SK-N-SH (cell line): ENCODE measurements at regions of chr3 and their contacts with region 1.

Region 1: DNA sequence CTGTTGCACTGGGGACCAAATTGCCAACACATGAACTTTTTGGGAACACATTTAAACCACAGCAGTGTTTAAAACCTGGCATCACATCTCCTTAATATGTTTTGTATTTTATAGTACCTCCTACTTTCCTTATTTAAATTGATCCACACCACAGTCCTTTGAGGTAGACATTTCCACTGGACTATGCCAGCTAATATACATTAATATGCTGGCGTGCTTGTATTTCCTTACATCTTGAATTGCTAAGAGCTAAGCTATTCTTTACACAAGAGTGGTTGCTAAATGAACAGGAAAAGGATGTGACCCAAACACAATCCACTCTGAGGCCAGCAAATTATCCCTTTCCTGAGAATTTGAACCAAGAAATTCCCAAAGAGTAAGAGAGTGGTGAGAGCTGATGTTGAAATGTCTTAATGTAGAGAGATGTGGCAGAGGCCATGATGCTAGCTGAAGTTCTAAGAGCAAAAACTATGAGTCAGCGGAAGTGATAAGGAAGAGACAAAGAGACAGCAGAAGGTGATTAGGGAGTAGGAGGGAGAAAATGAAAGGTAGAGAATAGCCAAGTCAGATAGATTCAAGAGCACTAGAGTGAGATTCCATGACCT is 131.2 kb downstream of the CD47 start:
- DNase-seq: no peak
- H3K4me3 ChIP-seq: no peak overlapping the region
- H3K27ac ChIP-seq: no peak overlapping the region
- H3K4me1 ChIP-seq: peaks cover 11 to 16% of the 10 kb centered on the region in 2 experiments; a peak in 3 of 4 replicates
- H3K27me3 ChIP-seq: no peaks in the 10 kb centered on the region
- CTCF ChIP-seq: no peak
- EP300 ChIP-seq: no peak
- RAD21 ChIP-seq: no peak

Region 2: GRCh38 chr3:107969994-107970819 is 10.6 kb after region 1 on chr3:
- CTCF ChIA-PET with region 1: interaction called, 14 read pairs
- POLR2A ChIA-PET with region 1: no interaction called
- DNase-seq: peak; percentile 33
- H3K4me3 ChIP-seq: no peak overlapping the region
- H3K27ac ChIP-seq: peak overlapping the region; percentile 3 to 68; a peak in 3 of 4 replicates
- H3K4me1 ChIP-seq: peaks cover 6 to 22% of the 10 kb centered on the region in 2 experiments; a peak in 3 of 4 replicates
- H3K27me3 ChIP-seq: no peaks in the 10 kb centered on the region
- CTCF ChIP-seq: no peak
- EP300 ChIP-seq: 0 out of 4 replicates have a peak, but pooled peaks of 1 of the 2 experiments have one; percentile 20
- RAD21 ChIP-seq: peak; percentile 2; the same call in 1 of the 2 replicates